HEK293T (cell line): ENCODE measurements at regions of chr10 and their contacts with region 1.

Region 1: GRCh38 chr10:63629363-63630084 is 108.3 kb downstream of the REEP3 start:
- DNase-seq: peak; percentile 81

Region 2: DNA sequence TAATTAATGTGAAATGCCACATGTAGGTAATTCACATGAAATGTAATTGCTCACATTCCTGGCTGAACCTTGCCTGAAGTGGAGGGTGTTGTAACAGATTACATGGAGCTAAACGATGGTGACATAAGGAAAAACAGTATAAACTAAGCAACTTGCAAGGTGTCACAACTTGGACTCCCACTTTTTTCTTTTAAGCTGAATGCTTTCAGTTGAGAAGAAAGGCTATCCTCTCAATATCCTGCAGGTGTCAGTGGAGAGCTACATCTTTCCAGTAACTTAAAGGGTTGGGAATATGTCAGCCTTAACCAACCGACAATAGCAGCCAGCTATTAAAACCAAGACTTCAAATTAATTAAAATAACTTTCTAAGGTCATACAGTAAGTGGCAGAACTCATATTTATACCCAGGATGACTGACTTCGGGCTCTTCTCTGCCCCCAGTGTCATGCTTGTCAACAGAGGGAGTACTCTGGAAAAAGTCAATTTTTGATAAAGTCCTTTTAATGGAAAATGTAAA is 462.7 kb before region 1 on chr10:
- CTCF ChIA-PET with region 1: interaction called, 10 read pairs
- POLR2A ChIA-PET with region 1: interaction called, 11 read pairs
- DNase-seq: peak; percentile 49

Region 3: DNA sequence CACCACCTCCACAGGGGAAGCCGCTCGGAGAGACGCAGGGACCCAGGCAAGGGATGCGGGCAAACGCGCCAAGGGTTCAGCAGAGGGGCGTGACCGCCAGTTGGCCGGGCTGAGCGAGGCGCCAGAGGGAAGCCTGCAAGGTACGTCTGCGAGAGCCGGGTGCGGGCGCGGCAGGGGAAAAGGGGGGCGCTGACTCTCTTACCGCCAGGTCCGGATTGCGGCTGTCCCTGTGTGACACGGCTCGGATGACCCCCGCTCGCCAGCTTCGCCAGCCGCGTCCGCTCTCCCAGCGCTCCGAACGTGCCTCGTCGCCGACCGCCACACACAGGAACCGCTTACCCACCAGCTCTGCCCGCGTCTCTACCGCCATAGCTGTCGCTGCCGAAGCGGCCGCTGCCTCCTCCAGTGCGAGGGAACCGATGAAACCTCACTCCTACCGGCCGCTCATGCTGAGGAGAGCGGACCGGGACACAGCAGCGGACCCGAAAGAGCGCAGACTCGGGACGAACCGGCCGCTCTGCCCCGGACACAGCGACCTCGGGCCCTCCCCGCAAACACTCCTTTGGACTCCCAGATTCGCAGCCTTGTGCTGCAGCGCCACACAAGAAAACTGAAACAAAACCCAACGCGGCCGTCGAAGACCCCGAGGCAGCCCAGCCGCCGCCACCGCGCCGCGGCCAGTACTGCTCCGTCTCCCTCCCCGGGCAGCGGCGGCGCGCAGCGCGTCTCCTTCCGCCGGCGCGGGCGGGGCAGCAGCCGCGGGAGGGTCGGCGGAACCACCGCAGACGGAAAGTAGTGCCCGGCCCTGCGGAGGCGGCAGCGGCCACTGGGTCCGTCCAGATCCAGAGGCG is 164.0 kb before region 1 on chr10 and contains the start of gene JMJD1C:
- CTCF ChIA-PET with region 1: interaction called, 8 read pairs
- POLR2A ChIA-PET with region 1: interaction called, 18 read pairs
- DNase-seq: peak; percentile 77

Region 4: GRCh38 chr10:63521416-63522276 is 107.9 kb before region 1 on chr10:
- CTCF ChIA-PET with region 1: interaction called, 4 read pairs
- POLR2A ChIA-PET with region 1: interaction called, 32 read pairs
- DNase-seq: peak; percentile 74

Region 5: GRCh38 chr10:63603709-63604445 is 25.6 kb before region 1 on chr10:
- CTCF ChIA-PET with region 1: no interaction called
- POLR2A ChIA-PET with region 1: no interaction called
- DNase-seq: no peak

Region 6: GRCh38 chr10:63614371-63614891 is 15.1 kb before region 1 on chr10:
- CTCF ChIA-PET with region 1: no interaction called
- POLR2A ChIA-PET with region 1: interaction called, 12 read pairs
- DNase-seq: no peak

Region 7: DNA sequence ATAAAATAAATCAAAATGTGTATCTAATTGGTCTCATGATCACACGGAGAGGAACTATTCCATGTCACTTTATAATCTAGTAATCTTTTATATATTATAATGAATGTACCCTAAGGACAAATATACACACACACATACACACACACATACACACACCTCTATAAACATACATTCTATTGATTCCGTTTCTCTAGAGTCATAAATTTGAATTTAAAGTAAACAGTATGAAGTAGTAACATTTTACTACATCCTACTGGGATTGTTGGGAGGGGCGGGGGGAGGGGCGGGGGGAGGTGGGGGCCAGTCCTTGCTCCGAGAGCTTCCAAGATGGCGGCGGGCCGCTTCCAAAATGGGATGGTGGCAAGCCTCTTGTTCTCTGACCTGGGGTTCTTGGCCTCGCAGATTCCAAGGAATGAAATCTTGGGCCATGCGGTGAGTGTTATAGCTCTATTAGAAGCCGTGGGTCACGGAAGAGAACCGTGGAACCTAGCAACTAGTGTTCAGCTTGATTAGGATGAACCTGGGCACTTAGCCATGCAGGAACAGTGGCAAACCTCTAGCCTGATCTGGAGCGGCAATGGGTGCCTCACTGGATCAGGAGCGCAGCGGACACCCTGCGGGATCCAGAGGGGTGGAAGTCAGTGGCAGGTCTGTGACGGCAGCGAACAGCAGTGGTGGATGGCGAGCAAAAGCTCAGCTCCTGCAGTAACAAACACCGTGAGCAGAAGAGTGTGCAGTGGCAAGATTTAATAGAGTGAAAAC is 35.0 kb after region 1 on chr10:
- CTCF ChIA-PET with region 1: no interaction called
- POLR2A ChIA-PET with region 1: no interaction called
- DNase-seq: no peak

Region 8: GRCh38 chr10:63711867-63712716 is 82.6 kb after region 1 on chr10:
- CTCF ChIA-PET with region 1: interaction called, 4 read pairs
- POLR2A ChIA-PET with region 1: interaction called, 25 read pairs
- DNase-seq: no peak

Region 9: DNA sequence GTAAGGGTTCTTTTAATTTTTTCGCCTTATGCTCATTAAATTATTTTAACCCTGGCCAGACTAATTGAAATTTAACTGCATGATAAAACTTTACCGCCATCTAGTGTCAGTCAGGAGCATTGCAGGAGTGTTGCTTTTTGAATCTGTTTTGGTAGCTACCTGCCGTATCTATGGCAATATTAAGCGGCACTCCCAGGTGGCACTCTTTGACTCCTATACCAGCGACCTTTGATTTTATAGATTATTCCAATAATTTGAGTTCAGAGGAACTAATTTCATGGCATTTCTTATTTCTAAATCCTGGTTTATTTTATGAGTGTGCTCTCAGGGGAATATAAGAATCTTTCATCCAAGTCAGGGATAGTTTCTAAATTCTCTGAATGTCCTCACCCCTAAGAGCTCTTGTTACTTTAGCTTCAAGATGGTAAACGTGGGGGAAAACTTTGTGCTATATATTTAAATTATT is 90.6 kb after region 1 on chr10:
- CTCF ChIA-PET with region 1: interaction called, 17 read pairs
- POLR2A ChIA-PET with region 1: interaction called, 12 read pairs
- DNase-seq: peak; percentile 38

Region 10: GRCh38 chr10:64091897-64092296 is 462.4 kb after region 1 on chr10:
- CTCF ChIA-PET with region 1: no interaction called
- POLR2A ChIA-PET with region 1: no interaction called
- DNase-seq: peak; percentile 12